ENCODE measurements at regions of chr3 and their contacts with region 1.

Region 1: GRCh38 chr3:64030741-64031140 is 7.4 kb upstream of the PSMD6 start:
- DNase-seq: peak; percentile 83
- H3K4me3 Mint-ChIP-seq: peak overlapping the region; percentile 52
- H3K27ac Mint-ChIP-seq: no peak overlapping the region
- H3K4me1 Mint-ChIP-seq: peaks cover 6% of the 10 kb centered on the region
- H3K27me3 Mint-ChIP-seq: peaks cover 10% of the 10 kb centered on the region

Region 2: GRCh38 chr3:64257100-64257755 is 226.5 kb after region 1 on chr3:
- CTCF ChIA-PET with region 1: no interaction called
- POLR2A ChIA-PET with region 1: no interaction called
- intact Hi-C with region 1: no loop called
- DNase-seq: no peak
- H3K4me3 Mint-ChIP-seq: no peak overlapping the region
- H3K27ac Mint-ChIP-seq: no peak overlapping the region
- H3K4me1 Mint-ChIP-seq: no peaks in the 10 kb centered on the region
- H3K27me3 Mint-ChIP-seq: peaks cover 11% of the 10 kb centered on the region

Region 3: GRCh38 chr3:64399205-64399800 is 368.6 kb after region 1 on chr3:
- CTCF ChIA-PET with region 1: interaction called, 4 read pairs
- POLR2A ChIA-PET with region 1: no interaction called
- intact Hi-C with region 1: loop called (anchors 1 kb)
- DNase-seq: no peak
- H3K4me3 Mint-ChIP-seq: no peak overlapping the region
- H3K27ac Mint-ChIP-seq: no peak overlapping the region
- H3K4me1 Mint-ChIP-seq: no peaks in the 10 kb centered on the region
- H3K27me3 Mint-ChIP-seq: no peaks in the 10 kb centered on the region

Region 4: DNA sequence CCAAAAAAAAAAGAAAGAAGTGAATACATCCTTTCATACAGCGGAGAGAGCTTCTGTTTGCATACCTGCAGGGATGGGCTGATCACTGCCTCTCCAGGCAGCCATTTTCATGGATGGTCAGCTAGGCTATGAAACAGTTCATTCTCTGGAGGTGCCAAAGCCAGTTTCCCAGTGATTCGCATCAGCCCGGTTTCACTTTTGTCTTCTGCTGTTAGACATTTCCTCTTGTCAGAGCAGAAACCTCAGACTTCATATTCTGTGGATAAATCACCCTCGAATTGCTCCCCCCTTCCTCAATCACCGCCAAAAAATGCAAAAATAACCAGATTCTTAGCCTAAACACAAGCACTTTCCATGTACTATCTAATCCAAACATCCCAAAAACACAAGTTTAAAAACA is 431.5 kb after region 1 on chr3:
- CTCF ChIA-PET with region 1: interaction called, 16 read pairs
- POLR2A ChIA-PET with region 1: no interaction called
- intact Hi-C with region 1: no loop called
- DNase-seq: no peak
- H3K4me3 Mint-ChIP-seq: no peak overlapping the region
- H3K27ac Mint-ChIP-seq: no peak overlapping the region
- H3K4me1 Mint-ChIP-seq: no peaks in the 10 kb centered on the region
- H3K27me3 Mint-ChIP-seq: peaks cover 11% of the 10 kb centered on the region

Region 5: GRCh38 chr3:64539451-64540196 is 508.9 kb after region 1 on chr3:
- CTCF ChIA-PET with region 1: no interaction called
- POLR2A ChIA-PET with region 1: no interaction called
- intact Hi-C with region 1: no loop called
- DNase-seq: no peak
- H3K4me3 Mint-ChIP-seq: no peak overlapping the region
- H3K27ac Mint-ChIP-seq: no peak overlapping the region
- H3K4me1 Mint-ChIP-seq: no peaks in the 10 kb centered on the region
- H3K27me3 Mint-ChIP-seq: peaks cover 3% of the 10 kb centered on the region

Measured in activated CD4-positive, alpha-beta memory T cell treated with anti-CD3 and anti-CD28 coated beads for 36 hours (primary cell).